WTC11 (cell line): ENCODE measurements at regions of chr6 and their contacts with region 1.

Region 1: DNA sequence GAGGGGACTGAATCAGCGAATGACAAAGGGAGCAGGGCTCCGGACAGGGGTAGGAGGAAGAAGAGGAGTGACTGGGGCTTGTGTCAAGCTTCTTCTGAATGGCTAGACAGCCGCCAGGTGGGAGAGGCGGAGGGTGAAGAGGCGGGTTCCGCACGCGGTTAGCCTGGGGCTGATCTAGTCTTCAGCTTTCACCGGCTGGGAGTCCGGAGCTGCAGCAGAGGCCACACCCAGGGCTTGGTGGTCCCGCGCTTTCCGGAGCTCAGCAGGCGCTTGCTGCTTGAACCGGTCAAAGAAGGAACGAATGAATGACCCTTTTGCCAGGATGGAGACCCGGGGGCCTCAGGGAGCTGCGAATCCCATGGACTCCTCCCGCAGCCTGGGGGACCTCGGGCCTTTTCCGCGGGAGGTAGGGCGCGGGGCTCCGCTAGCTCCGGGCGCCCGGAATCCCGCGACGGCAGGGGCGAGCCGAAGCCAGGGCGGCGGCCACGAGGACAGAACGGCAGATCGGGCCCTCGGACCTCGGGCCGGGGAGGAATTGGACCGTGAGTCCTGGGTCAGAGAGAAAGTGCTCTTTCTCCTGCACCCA is at the start of gene C6orf141:
- DNase-seq: peak; percentile 83
- ATAC-seq: peak; percentile 84
- H3K4me3 Mint-ChIP-seq: peak within 1 kb of the TSS; percentile 76
- H3K27ac Mint-ChIP-seq: peak within 1 kb of the TSS; percentile 84
- H3K4me1 Mint-ChIP-seq: peaks cover 50% of the 10 kb centered on the region
- H3K27me3 Mint-ChIP-seq: peaks cover 70% of the 10 kb centered on the region
- CTCF ChIP-seq: no peak
- total RNA-seq, gene C6orf141: 6.5 to 14.4 TPM (median 8.2 TPM) in 3 replicates

Region 2: DNA sequence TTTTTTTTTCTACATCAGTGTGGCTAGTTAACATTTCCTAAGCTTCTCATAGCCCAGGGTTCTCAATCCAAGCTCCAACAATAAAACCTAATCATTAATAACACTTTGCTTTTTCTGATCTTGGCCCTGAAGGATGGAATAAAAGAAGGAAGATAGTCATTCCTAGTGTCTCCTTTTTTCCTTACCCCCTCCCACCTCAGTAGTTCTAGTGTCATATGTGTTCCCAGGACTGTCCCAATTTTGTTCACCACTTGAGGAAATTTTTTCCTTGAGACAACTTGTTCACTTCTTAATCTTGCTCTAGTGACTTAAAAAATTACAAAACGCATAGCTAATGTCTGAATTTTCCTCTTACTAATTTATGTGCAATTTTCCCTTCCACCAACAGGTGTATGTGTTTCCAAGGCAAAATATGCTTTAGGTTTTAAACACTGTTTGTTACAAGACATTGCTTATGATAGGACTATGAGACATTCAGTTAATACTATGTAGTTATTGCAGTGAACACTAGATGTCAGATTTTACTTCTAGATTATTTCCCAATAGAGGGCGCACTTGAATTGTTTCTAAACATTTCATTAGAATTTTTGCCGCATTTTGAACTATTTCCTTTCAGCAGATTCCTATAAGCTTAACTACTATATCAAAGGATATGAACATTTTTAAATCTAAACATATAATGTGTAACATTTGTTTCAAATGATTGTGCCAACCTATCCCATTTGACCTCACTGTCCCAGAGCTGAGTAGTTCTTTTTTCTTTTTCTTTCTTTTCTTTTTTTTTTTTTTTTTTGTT is 18.6 kb before region 1 on chr6:
- CTCF ChIA-PET with region 1: interaction called, 10 read pairs
- POLR2A ChIA-PET with region 1: interaction called, 3 read pairs
- DNase-seq: no peak
- ATAC-seq: peak; percentile 72
- H3K4me3 Mint-ChIP-seq: peak overlapping the region; percentile 32
- H3K27ac Mint-ChIP-seq: no peak overlapping the region
- H3K4me1 Mint-ChIP-seq: peaks cover 5% of the 10 kb centered on the region
- H3K27me3 Mint-ChIP-seq: no peaks in the 10 kb centered on the region
- CTCF ChIP-seq: no peak

Region 3: DNA sequence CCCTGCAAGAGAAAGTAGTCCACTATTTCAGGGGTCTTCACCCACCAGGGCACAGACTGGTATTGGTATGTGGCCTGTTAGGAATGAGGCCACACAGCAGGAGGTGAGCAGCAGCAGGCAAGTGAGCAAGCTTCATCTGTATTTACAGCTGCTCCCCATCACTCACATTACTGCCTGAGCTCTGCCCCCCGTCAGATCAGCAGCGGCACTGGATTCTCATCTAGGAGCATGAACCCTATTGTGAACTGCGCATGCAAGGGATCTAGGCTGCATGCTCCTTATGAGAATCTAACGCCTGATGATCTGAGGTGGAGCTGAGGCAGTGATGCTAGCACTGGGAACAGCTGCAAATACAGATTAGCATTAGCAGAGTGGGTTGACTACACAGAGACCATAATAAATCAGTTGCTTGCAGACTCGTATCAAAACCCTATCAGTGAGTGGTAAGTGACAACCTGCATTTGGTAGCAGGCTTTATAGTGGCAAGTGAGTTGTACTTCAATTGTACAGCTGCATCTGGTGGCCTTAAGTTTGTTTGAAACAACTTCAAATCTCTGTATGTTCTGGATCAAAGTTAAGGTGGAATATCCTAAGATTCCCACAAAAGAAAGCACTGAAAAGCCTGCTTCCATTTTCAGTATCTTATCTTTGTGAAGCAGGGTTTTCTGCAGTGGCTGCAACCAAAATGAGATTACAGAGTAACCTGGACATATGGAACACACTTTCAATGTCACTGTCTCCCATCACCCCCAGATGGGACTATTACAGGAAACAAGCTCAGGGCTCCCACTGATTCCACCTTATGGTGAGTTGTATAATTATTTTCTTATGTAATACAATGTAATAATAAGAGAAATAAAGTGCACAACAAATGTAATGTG is 12.7 kb after region 1 on chr6:
- CTCF ChIA-PET with region 1: interaction called, 17 read pairs
- POLR2A ChIA-PET with region 1: interaction called, 3 read pairs
- DNase-seq: no peak
- ATAC-seq: no peak
- H3K4me3 Mint-ChIP-seq: no peak overlapping the region
- H3K27ac Mint-ChIP-seq: no peak overlapping the region
- H3K4me1 Mint-ChIP-seq: no peaks in the 10 kb centered on the region
- H3K27me3 Mint-ChIP-seq: peaks cover 75% of the 10 kb centered on the region
- CTCF ChIP-seq: no peak